Testis (tissue), 5 donors: ENCODE measurements at regions of chr18 and their contacts with region 1.

Region 1: DNA sequence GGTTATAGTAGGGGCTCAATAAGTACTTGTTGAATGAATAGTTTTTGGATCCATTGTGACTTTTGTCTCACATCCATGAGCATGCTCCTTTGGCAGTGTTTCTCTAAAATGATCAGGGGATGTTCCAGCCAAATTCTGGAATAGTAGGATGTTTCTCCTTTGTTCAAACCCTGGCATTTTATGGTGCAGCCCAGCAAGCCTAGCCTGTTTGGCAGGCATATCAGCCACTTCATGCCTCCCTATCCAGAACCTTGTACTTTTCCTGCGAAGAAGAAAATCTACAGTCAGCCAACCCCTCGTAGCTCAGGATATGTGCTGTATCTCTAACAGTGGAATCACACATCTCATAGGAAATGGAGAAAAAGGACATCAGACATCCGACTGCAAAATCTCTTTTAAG is 27.1 kb upstream of the RPRD1A start:
- DNase-seq: no peak
- H3K4me3 ChIP-seq: no peak overlapping the region
- H3K27ac ChIP-seq: no peak overlapping the region
- H3K4me1 ChIP-seq: no peaks in the 10 kb centered on the region
- H3K27me3 ChIP-seq: no peaks in the 10 kb centered on the region
- CTCF ChIP-seq: no peak
- POLR2A ChIP-seq: no peak

Region 2: GRCh38 chr18:35999925-36000324 is 94.5 kb before region 1 on chr18:
- intact Hi-C with region 1: no loop called
- DNase-seq: no peak
- H3K4me3 ChIP-seq: no peak overlapping the region
- H3K27ac ChIP-seq: no peak overlapping the region
- H3K4me1 ChIP-seq: no peaks in the 10 kb centered on the region
- H3K27me3 ChIP-seq: no peaks in the 10 kb centered on the region
- CTCF ChIP-seq: no peak
- POLR2A ChIP-seq: no peak

Region 3: GRCh38 chr18:36284671-36285295 is 190.4 kb after region 1 on chr18:
- intact Hi-C with region 1: loop called (anchors 5 kb)
- DNase-seq: peak; percentile 72
- H3K4me3 ChIP-seq: no peak overlapping the region
- H3K27ac ChIP-seq: no peak overlapping the region
- H3K4me1 ChIP-seq: peaks cover 4% of the 10 kb centered on the region
- H3K27me3 ChIP-seq: no peaks in the 10 kb centered on the region
- CTCF ChIP-seq: peak; percentile 92 to 93 (median 93)
- POLR2A ChIP-seq: no peak